Lower lobe of right lung (tissue), 2 donors: ENCODE measurements at regions of chr7 and their contacts with region 1.

Region 1: GRCh38 chr7:36661135-36661840 is 63.0 kb downstream of the AOAH start:
- DNase-seq: no peak
- ATAC-seq: peak; percentile 55 to 61
- H3K4me3 ChIP-seq: no peak overlapping the region
- H3K27ac ChIP-seq: no peak overlapping the region
- H3K4me1 ChIP-seq: peaks cover 2% of the 10 kb centered on the region
- H3K27me3 ChIP-seq: no peaks in the 10 kb centered on the region
- CTCF ChIP-seq: no peak

Region 2: GRCh38 chr7:35906191-35906908 is 754.9 kb before region 1 on chr7:
- intact Hi-C with region 1: no loop called
- DNase-seq: no peak
- ATAC-seq: peak; percentile 93
- H3K4me3 ChIP-seq: no peak overlapping the region
- H3K27ac ChIP-seq: no peak overlapping the region
- H3K4me1 ChIP-seq: no peaks in the 10 kb centered on the region
- H3K27me3 ChIP-seq: no peaks in the 10 kb centered on the region
- CTCF ChIP-seq: peak; percentile 89

Region 3: GRCh38 chr7:36490404-36490830 is 170.9 kb before region 1 on chr7:
- intact Hi-C with region 1: loop called (anchors 10 kb)
- DNase-seq: no peak
- ATAC-seq: no peak
- H3K4me3 ChIP-seq: no peak overlapping the region
- H3K27ac ChIP-seq: no peak overlapping the region
- H3K4me1 ChIP-seq: no peaks in the 10 kb centered on the region
- H3K27me3 ChIP-seq: no peaks in the 10 kb centered on the region
- CTCF ChIP-seq: no peak